Activated CD8-positive, alpha-beta T cell treated with anti-CD3 and anti-CD28 coated beads for 36 hours (primary cell): ENCODE measurements at regions of chr2 and their contacts with region 1.

Region 1: DNA sequence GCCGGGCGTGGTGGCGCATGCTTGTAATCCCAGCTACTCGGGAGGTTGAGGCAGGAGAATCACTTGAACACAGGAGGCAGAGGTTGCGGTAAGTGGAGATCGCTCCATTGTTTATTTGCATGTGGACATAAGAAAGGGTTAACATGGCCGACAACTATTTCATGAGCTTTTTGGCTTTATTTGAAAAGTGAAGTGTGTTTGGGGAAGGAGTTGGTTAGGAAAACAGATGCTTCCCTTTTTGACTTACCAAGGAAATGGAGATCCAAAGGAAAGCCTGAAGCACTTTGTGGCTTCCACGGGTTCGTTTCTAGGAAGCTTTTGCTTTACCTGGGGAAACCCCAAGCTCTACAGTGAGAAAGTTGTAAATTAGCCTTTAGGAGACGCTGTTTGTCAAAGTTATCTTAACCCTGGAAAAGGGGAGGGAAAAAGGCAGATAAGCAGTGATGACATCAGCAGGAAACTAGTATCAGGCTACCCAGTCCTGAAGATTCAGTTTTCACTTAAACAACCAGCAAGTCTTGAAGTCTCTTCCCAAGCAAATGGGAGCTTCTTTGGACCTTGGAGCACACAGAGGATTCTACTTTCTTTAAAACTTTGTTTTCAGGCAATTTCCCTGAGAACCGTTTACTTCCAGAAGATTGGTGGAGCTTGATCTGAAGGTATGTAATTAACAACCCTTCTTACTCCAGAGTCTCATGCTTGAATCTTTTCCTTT is at the start of gene CASP10:
- DNase-seq: peak; percentile 28
- ATAC-seq: peak; percentile 74
- H3K4me3 Mint-ChIP-seq: peak within 1 kb of the TSS; percentile 98
- H3K27ac Mint-ChIP-seq: peak within 1 kb of the TSS; percentile 99
- H3K4me1 Mint-ChIP-seq: peaks cover 43% of the 10 kb centered on the region
- H3K27me3 Mint-ChIP-seq: no peaks in the 10 kb centered on the region
- CTCF ChIP-seq: peak; percentile 29
- total RNA-seq, gene CASP10: 18.3 to 22.6 TPM

Region 2: DNA sequence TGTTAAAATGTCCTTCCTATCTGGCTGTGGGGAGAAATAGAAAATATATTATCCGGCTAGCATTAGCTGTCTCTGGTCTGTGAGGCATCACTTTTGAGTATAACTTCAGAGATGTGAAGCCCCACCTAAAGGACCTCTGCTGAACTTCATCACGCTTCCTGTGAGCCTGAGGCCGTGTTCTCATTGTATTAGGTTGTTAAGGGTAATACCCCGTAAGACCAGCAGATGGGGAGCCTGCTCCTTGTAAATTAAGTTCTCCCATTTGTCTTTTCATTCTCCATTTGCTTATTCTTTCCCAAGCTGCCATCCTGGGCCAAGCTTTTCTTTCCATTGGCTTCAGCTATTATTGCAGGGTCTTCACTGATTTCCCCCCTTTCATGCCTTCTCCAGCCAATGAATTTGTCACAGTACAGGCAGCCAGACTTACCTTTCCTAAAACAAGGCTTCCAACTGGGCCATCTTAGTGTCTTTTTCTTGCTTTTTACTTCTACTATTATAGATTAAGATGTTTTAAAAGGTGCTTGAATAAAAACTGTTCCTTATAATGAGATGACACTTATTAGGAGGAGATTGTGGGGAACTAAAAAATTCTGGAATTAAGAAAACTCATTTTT is 281.2 kb before region 1 on chr2:
- CTCF ChIA-PET with region 1: interaction called, 35 read pairs
- POLR2A ChIA-PET with region 1: interaction called, 3 read pairs
- intact Hi-C with region 1: no loop called
- DNase-seq: peak; percentile 90
- ATAC-seq: peak; percentile 100
- H3K4me3 Mint-ChIP-seq: no peak overlapping the region
- H3K27ac Mint-ChIP-seq: peak overlapping the region; percentile 72
- H3K4me1 Mint-ChIP-seq: peaks cover 19% of the 10 kb centered on the region
- H3K27me3 Mint-ChIP-seq: no peaks in the 10 kb centered on the region
- CTCF ChIP-seq: peak; percentile 95

Region 3: GRCh38 chr2:200963124-200963917 is 219.5 kb before region 1 on chr2 and contains the start of gene ORC2:
- CTCF ChIA-PET with region 1: interaction called, 13 read pairs
- POLR2A ChIA-PET with region 1: interaction called, 5 read pairs
- intact Hi-C with region 1: no loop called
- DNase-seq: peak; percentile 94
- ATAC-seq: peak; percentile 97
- H3K4me3 Mint-ChIP-seq: peak within 1 kb of the TSS; percentile 92
- H3K27ac Mint-ChIP-seq: peak within 1 kb of the TSS; percentile 96
- H3K4me1 Mint-ChIP-seq: peaks cover 55% of the 10 kb centered on the region
- H3K27me3 Mint-ChIP-seq: no peaks in the 10 kb centered on the region
- CTCF ChIP-seq: peak; percentile 87
- total RNA-seq, gene ORC2: 51.3 to 59.2 TPM

Region 4: GRCh38 chr2:201038855-201039254 is 144.0 kb before region 1 on chr2:
- CTCF ChIA-PET with region 1: no interaction called
- POLR2A ChIA-PET with region 1: no interaction called
- intact Hi-C with region 1: no loop called
- DNase-seq: no peak
- ATAC-seq: no peak
- H3K4me3 Mint-ChIP-seq: no peak overlapping the region
- H3K27ac Mint-ChIP-seq: no peak overlapping the region
- H3K4me1 Mint-ChIP-seq: peaks cover 4% of the 10 kb centered on the region
- H3K27me3 Mint-ChIP-seq: no peaks in the 10 kb centered on the region
- CTCF ChIP-seq: no peak

Region 5: GRCh38 chr2:201158111-201158929 is 24.5 kb before region 1 on chr2:
- CTCF ChIA-PET with region 1: interaction called, 18 read pairs
- POLR2A ChIA-PET with region 1: no interaction called
- intact Hi-C with region 1: no loop called
- DNase-seq: peak; percentile 64
- ATAC-seq: peak; percentile 81
- H3K4me3 Mint-ChIP-seq: no peak overlapping the region
- H3K27ac Mint-ChIP-seq: peak overlapping the region; percentile 85
- H3K4me1 Mint-ChIP-seq: peaks cover 24% of the 10 kb centered on the region
- H3K27me3 Mint-ChIP-seq: no peaks in the 10 kb centered on the region
- CTCF ChIP-seq: peak; percentile 65

Region 6: DNA sequence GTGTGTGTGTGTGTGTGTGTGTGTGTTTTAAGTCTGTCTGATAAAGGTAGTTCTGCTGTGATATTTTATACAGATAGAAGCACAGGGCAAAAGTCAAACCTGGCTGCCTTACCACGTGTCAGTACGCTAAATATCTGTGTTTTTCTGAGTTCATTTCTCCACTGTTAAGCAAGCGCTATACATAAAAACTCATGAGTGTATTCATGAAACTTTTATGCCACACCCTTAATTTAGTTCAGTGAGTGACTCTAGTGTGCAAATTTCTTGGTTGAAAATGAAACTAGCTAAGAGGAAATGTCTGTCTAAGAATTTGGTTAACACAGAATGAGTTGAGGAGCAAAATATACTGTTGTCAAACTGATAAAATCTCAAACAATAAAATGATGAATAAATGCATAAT is 11.3 kb after region 1 on chr2:
- CTCF ChIA-PET with region 1: interaction called, 22 read pairs
- POLR2A ChIA-PET with region 1: interaction called, 6 read pairs
- intact Hi-C with region 1: no loop called
- DNase-seq: no peak
- ATAC-seq: peak; percentile 91
- H3K4me3 Mint-ChIP-seq: peak overlapping the region; percentile 48
- H3K27ac Mint-ChIP-seq: peak overlapping the region; percentile 57
- H3K4me1 Mint-ChIP-seq: peaks cover 63% of the 10 kb centered on the region
- H3K27me3 Mint-ChIP-seq: no peaks in the 10 kb centered on the region
- CTCF ChIP-seq: no peak

Region 7: DNA sequence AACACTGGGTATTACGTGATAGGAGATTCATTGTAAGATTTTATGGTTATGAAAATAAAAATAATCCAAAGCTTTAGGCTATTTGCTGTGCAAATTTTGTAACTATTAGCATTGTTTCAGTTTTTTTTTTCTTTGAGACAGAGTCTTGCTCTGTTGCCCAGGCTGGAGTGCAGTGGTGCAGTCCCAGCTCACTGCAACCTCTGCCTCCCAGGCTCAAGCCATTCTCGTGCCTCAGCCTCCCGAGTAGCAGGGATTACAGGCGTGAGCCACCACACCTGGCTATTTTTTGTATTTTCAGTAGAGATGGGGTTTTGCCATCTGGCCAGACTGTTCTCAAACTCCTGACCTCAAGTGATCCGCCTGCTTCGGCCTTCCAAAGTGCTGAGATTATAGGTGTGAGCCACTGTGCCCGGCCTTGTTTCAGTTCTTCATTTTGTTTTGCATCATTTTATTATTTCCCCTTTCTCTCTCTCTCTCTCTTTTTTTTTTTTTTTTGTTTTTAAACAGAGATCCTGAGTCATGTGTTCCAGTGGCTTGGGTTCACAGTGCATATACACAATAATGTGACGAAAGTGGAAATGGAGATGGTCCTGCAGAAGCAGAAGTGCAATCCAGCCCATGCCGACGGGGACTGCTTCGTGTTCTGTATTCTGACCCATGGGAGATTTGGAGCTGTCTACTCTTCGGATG is 25.9 kb after region 1 on chr2:
- CTCF ChIA-PET with region 1: interaction called, 13 read pairs
- POLR2A ChIA-PET with region 1: interaction called, 5 read pairs
- intact Hi-C with region 1: no loop called
- DNase-seq: no peak
- ATAC-seq: no peak
- H3K4me3 Mint-ChIP-seq: no peak overlapping the region
- H3K27ac Mint-ChIP-seq: no peak overlapping the region
- H3K4me1 Mint-ChIP-seq: peaks cover 20% of the 10 kb centered on the region
- H3K27me3 Mint-ChIP-seq: no peaks in the 10 kb centered on the region
- CTCF ChIP-seq: no peak

Region 8: GRCh38 chr2:201220102-201220570 is 37.3 kb after region 1 on chr2:
- CTCF ChIA-PET with region 1: interaction called, 20 read pairs
- POLR2A ChIA-PET with region 1: interaction called, 5 read pairs
- intact Hi-C with region 1: no loop called
- DNase-seq: peak; percentile 21
- ATAC-seq: no peak
- H3K4me3 Mint-ChIP-seq: no peak overlapping the region
- H3K27ac Mint-ChIP-seq: peak overlapping the region; percentile 63
- H3K4me1 Mint-ChIP-seq: peaks cover 51% of the 10 kb centered on the region
- H3K27me3 Mint-ChIP-seq: no peaks in the 10 kb centered on the region
- CTCF ChIP-seq: no peak

Region 9: DNA sequence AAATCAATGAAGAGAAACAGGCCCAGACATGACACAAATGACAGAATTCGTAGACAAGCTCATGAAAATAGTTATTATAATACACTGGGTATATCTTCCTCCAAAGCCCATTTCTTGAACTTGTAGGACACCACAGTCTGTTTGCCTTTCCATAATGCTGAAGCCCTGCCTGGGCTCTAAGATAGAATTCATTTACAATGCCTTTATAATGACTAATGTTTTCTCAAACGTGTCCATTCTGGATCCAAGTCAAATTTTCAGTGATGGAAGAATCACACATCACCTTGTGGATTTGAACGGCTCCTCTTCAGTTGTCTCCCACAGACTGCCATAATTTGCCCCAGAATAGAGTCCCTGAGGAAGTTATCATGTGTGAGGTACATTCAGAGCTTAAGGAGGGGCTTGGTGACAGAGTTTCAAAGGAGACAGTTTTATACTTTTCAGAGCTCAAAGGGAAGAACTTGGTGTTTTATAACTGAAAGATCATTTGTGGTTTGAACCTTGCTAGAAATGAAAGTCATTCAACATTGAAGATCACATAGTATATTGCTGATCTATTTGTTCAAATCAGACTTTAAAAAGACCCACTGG is 115.8 kb after region 1 on chr2:
- CTCF ChIA-PET with region 1: no interaction called
- POLR2A ChIA-PET with region 1: no interaction called
- intact Hi-C with region 1: no loop called
- DNase-seq: no peak
- ATAC-seq: no peak
- H3K4me3 Mint-ChIP-seq: no peak overlapping the region
- H3K27ac Mint-ChIP-seq: no peak overlapping the region
- H3K4me1 Mint-ChIP-seq: peaks cover 5% of the 10 kb centered on the region
- H3K27me3 Mint-ChIP-seq: no peaks in the 10 kb centered on the region
- CTCF ChIP-seq: no peak